GM12878 (cell line): ENCODE measurements at regions of chr1 and their contacts with region 1.

Region 1: DNA sequence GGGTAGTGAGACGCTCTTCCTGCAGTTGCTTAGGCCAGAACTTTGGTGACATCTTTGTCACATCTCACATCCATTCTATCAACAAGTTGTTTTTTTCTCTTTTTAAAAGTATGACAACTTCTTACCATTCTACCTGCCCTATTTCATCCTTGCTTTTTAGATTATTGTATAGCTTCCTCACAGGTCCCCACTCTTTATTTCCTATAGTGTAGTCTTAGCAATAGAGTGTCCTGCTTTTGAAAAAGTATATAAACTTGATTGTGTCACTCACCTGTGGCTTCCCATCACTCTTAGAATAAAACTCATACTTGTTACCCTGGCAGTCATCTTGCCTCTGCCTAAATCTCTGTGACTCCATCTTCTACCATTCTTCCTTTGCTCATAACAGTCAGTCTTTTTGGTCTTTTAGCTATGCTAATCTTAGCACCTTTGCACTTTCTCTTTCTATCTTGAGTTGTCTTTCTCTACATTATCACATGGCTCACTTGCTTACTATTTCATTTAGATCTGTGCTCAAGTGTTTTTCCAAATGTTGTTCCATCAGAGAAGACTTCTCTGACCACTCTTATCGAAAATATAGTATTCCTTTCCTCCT is 9.5 kb downstream of the CDC73 start:
- DNase-seq: no peak
- ATAC-seq: peak; percentile 54
- H3K4me3 ChIP-seq: no peak overlapping the region
- H3K27ac ChIP-seq: no peak overlapping the region
- H3K4me1 ChIP-seq: no peaks in the 10 kb centered on the region; the same call in 1 of the 2 replicates
- H3K27me3 ChIP-seq: no peaks in the 10 kb centered on the region
- CTCF ChIP-seq: no peak
- EP300 ChIP-seq: no peak
- POLR2A ChIP-seq: no peak
- RAD21 ChIP-seq: no peak

Region 2: DNA sequence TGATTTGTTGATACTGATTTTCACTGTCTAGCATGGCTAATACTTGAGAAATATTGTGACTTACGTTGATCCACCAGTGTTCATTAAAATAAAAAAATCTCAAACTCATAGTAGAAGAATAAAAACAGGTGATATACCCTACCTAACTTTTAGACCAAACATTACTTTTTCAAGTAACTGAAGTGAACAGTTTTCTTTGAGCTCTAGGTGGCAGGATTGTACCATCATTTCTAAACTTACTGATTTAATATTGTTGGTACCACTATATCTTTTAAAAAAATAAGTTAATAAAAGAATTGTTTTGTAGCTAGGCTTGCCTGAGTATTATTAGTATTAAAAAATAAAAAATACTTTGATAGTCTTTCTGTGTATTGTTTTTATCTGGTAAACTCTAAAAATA is 11.9 kb after region 1 on chr1:
- CTCF ChIA-PET with region 1: interaction called, 11 read pairs
- POLR2A ChIA-PET with region 1: interaction called, 3 read pairs
- RAD21 ChIA-PET with region 1: no interaction called
- SMC1A ChIA-PET with region 1: no interaction called
- in situ Hi-C with region 1: no loop called
- intact Hi-C with region 1: no loop called
- DNase-seq: no peak
- ATAC-seq: peak; percentile 58; the same call in 2 of the 3 replicates
- H3K4me3 ChIP-seq: no peak overlapping the region
- H3K27ac ChIP-seq: no peak overlapping the region
- H3K4me1 ChIP-seq: no peaks in the 10 kb centered on the region
- H3K27me3 ChIP-seq: no peaks in the 10 kb centered on the region
- CTCF ChIP-seq: peak in 1 of 3 experiments; percentile 11; a peak in 1 of 6 replicates
- EP300 ChIP-seq: no peak
- POLR2A ChIP-seq: no peak
- RAD21 ChIP-seq: no peak

Region 3: DNA sequence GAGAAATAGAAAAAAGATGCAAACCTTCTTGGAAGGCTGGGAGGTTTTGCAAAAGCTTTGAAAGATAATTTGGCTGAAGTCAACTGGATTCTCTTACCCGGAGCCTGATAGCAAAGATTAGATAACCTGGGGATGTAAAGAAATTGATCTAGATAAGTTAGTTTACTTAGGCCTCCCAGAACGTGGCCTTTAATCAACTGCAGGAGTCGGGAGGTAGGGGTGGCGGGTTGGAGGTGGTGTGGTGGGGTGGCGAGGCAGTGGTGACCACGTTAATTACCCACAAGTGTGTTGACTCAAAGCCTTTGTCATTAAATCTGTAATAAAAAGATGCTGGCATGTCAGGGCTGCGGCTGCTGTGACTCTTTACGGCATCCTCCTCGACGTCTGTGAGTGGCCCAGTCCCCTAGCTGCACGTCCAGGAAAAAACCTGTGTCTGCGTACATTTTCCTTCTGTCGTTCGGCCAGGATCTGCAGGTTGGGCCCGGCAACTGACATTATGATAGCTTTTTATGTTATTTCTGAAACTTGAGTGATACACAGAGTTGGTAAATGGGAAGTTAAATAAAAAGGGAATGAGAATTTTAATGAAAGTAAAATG is 106.1 kb after region 1 on chr1:
- CTCF ChIA-PET with region 1: no interaction called
- POLR2A ChIA-PET with region 1: no interaction called
- RAD21 ChIA-PET with region 1: no interaction called
- SMC1A ChIA-PET with region 1: no interaction called
- in situ Hi-C with region 1: no loop called
- intact Hi-C with region 1: no loop called
- DNase-seq: no peak
- ATAC-seq: no peak
- H3K4me3 ChIP-seq: no peak overlapping the region
- H3K27ac ChIP-seq: no peak overlapping the region
- H3K4me1 ChIP-seq: no peaks in the 10 kb centered on the region
- H3K27me3 ChIP-seq: no peaks in the 10 kb centered on the region
- CTCF ChIP-seq: no peak
- EP300 ChIP-seq: no peak
- POLR2A ChIP-seq: no peak
- RAD21 ChIP-seq: no peak